Activated CD8-positive, alpha-beta T cell treated with anti-CD3 and anti-CD28 coated beads for 36 hours (primary cell): ENCODE measurements at regions of chr13 and their contacts with region 1.

Region 1: DNA sequence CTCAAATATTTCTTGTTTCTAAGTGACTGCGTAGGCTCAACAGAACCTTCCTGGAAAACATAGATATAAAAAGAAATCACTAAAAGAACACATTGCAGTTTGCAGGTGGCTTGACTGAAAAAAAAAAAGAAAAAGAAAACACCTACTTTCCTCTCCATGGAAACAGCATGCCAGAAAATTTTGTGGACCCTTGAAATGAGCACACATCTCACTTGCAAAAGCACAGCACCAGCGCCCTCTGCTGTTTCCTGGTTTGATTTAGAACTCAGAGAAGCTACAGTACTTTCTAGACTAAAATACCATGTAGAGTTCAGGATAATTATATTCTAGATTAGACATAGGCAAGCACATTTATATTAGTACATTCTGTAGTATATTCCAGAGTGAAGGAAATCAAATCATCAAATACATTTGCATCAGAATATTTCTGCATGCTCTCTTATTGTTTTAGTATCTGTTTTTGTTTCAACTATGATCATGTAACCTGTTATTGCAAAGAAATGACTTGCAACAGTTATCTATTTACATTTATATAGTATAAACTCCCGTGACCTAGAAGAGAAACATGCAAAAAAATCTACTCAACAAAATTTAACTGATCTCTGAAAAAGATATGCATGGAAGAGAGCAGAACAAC is 22.3 kb upstream of the XPO4 start:
- DNase-seq: peak; percentile 91
- ATAC-seq: peak; percentile 58
- H3K4me3 Mint-ChIP-seq: no peak overlapping the region
- H3K27ac Mint-ChIP-seq: no peak overlapping the region
- H3K4me1 Mint-ChIP-seq: no peaks in the 10 kb centered on the region
- H3K27me3 Mint-ChIP-seq: no peaks in the 10 kb centered on the region
- CTCF ChIP-seq: peak; percentile 90

Region 2: GRCh38 chr13:20182231-20182846 is 742.5 kb before region 1 on chr13:
- CTCF ChIA-PET with region 1: interaction called, 3 read pairs
- POLR2A ChIA-PET with region 1: no interaction called
- intact Hi-C with region 1: loop called (anchors 10 kb)
- DNase-seq: peak; percentile 58
- ATAC-seq: peak; percentile 100
- H3K4me3 Mint-ChIP-seq: no peak overlapping the region
- H3K27ac Mint-ChIP-seq: no peak overlapping the region
- H3K4me1 Mint-ChIP-seq: no peaks in the 10 kb centered on the region
- H3K27me3 Mint-ChIP-seq: peaks cover 34% of the 10 kb centered on the region
- CTCF ChIP-seq: peak; percentile 86

Region 3: DNA sequence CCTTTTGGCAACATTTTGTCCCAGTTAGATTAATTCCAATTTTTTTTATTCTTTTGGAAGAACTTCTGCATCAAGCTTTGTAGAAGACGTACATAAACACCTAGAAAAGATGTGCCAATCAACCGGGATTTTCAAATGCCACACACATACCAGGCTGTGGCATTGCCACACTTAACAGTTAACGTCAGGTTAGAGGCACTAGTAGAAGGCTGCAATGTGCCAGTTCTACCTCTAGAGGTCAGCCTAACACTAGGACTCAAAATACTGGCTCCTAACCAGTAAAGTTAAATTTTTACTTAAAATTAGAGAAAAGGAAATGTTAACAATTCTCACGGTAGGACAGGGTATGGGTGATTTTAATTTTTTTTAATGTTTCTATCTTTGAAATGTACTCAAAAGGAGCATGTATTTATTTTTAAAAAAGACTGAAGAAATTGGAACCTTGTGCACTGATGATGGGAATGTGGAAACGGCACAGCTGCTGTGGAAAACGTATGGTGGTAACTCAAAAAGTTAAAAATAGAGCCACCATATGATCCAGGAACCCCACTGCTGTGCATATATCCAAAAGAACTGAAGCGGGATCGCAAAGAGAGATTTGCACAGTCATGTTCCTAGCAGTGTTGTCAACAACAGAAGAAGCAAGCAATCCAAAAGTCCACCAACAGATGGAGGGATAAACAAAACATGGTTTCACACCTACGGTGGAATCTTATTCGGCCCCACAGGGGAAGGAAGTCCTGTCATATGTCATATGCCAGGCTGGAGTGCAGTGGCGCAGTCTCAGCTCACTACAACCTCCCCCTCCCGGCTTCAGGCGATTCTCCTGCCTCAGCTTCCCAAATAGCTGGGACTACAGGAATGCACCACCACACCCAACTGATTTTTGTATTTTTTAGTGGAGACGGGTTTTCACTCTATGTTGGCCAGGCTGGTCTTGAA is 429.5 kb before region 1 on chr13:
- CTCF ChIA-PET with region 1: interaction called, 49 read pairs
- POLR2A ChIA-PET with region 1: no interaction called
- intact Hi-C with region 1: loop called (anchors 5 kb)
- DNase-seq: peak; percentile 79
- ATAC-seq: peak; percentile 89
- H3K4me3 Mint-ChIP-seq: no peak overlapping the region
- H3K27ac Mint-ChIP-seq: no peak overlapping the region
- H3K4me1 Mint-ChIP-seq: peaks cover 2% of the 10 kb centered on the region
- H3K27me3 Mint-ChIP-seq: no peaks in the 10 kb centered on the region
- CTCF ChIP-seq: peak; percentile 96

Region 4: DNA sequence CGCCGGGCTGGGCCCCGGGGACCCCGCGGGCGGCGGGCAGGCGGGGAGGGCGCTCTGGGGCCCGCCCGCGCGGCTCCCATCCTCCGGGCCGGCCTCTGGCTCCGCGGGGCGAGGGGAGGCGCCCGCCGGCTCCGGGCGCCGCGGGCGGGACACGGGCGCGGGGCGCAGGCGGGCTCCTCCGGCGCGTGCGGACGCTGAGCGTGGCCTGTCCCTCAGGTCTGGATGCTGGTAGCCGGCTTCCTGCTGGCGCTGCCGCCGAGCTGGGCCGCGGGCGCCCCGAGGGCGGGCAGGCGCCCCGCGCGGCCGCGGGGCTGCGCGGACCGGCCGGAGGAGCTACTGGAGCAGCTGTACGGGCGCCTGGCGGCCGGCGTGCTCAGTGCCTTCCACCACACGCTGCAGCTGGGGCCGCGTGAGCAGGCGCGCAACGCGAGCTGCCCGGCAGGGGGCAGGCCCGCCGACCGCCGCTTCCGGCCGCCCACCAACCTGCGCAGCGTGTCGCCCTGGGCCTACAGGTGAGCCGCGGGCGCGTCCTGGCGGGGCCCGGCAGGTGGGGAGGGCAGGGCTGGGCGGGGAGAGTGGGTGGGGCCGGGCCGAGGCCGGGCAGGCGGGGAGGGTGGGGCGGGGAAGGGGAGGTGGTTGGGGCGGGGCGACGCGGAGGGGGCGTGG is 221.0 kb before region 1 on chr13:
- CTCF ChIA-PET with region 1: interaction called, 11 read pairs
- POLR2A ChIA-PET with region 1: no interaction called
- intact Hi-C with region 1: no loop called
- DNase-seq: peak; percentile 83
- ATAC-seq: peak; percentile 91
- H3K4me3 Mint-ChIP-seq: no peak overlapping the region
- H3K27ac Mint-ChIP-seq: no peak overlapping the region
- H3K4me1 Mint-ChIP-seq: peaks cover 11% of the 10 kb centered on the region
- H3K27me3 Mint-ChIP-seq: peaks cover 14% of the 10 kb centered on the region
- CTCF ChIP-seq: peak; percentile 36

Region 5: DNA sequence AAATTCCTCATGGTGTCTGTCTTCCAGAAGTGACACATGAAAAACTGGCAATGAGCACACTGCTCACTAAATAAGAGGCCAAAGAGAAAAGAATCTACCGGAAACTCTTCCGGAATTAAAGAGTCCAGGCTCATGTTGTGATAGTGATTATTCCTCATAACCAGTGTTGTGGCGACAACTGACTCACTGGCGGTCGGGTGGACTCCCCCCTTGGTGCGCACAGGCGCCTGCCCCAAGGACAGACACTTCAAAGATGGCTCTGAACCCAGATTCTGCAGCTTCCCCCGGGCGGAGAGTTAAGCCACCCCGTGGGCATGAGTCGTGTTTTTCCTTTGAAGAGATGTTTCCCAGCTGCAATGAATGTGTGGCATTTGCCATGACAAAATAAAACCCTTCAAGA is 211.1 kb before region 1 on chr13:
- CTCF ChIA-PET with region 1: interaction called, 9 read pairs
- POLR2A ChIA-PET with region 1: no interaction called
- intact Hi-C with region 1: loop called (anchors 5 kb)
- DNase-seq: peak; percentile 28
- ATAC-seq: no peak
- H3K4me3 Mint-ChIP-seq: no peak overlapping the region
- H3K27ac Mint-ChIP-seq: no peak overlapping the region
- H3K4me1 Mint-ChIP-seq: peaks cover 10% of the 10 kb centered on the region
- H3K27me3 Mint-ChIP-seq: peaks cover 8% of the 10 kb centered on the region
- CTCF ChIP-seq: no peak

Region 6: GRCh38 chr13:20901668-20902437 is 23.0 kb before region 1 on chr13:
- CTCF ChIA-PET with region 1: interaction called, 10 read pairs
- POLR2A ChIA-PET with region 1: interaction called, 4 read pairs
- intact Hi-C with region 1: no loop called
- DNase-seq: peak; percentile 24
- ATAC-seq: peak; percentile 38
- H3K4me3 Mint-ChIP-seq: peak overlapping the region; percentile 84
- H3K27ac Mint-ChIP-seq: peak overlapping the region; percentile 82
- H3K4me1 Mint-ChIP-seq: peaks cover 33% of the 10 kb centered on the region
- H3K27me3 Mint-ChIP-seq: no peaks in the 10 kb centered on the region
- CTCF ChIP-seq: no peak

Region 7: GRCh38 chr13:20940083-20940880 is 15.4 kb after region 1 on chr13:
- CTCF ChIA-PET with region 1: interaction called, 11 read pairs
- POLR2A ChIA-PET with region 1: no interaction called
- intact Hi-C with region 1: no loop called
- DNase-seq: no peak
- ATAC-seq: no peak
- H3K4me3 Mint-ChIP-seq: no peak overlapping the region
- H3K27ac Mint-ChIP-seq: no peak overlapping the region
- H3K4me1 Mint-ChIP-seq: no peaks in the 10 kb centered on the region
- H3K27me3 Mint-ChIP-seq: peaks cover 14% of the 10 kb centered on the region
- CTCF ChIP-seq: no peak